Dendritic cell treated with granulocyte-macrophage colony-stimulating factor and Interleukin-4, amounts not matched to agents 40 ng/mL and 50 ng/mL, for 4 days (primary cell): ENCODE measurements at regions of chr5 and their contacts with region 1.

Region 1: GRCh38 chr5:123511648-123512605 is at the start of gene CSNK1G3:
- H3K4me3 Mint-ChIP-seq: peak within 1 kb of the TSS; percentile 97
- H3K27ac Mint-ChIP-seq: peak within 1 kb of the TSS; percentile 96
- H3K4me1 Mint-ChIP-seq: peaks cover 28% of the 10 kb centered on the region
- H3K27me3 Mint-ChIP-seq: peaks cover 5% of the 10 kb centered on the region

Region 2: GRCh38 chr5:121968910-121969607 is 1542.9 kb before region 1 on chr5:
- intact Hi-C with region 1: loop called (anchors 10 kb)
- H3K4me3 Mint-ChIP-seq: no peak overlapping the region
- H3K27ac Mint-ChIP-seq: no peak overlapping the region
- H3K4me1 Mint-ChIP-seq: peaks cover 24% of the 10 kb centered on the region
- H3K27me3 Mint-ChIP-seq: no peaks in the 10 kb centered on the region

Region 3: DNA sequence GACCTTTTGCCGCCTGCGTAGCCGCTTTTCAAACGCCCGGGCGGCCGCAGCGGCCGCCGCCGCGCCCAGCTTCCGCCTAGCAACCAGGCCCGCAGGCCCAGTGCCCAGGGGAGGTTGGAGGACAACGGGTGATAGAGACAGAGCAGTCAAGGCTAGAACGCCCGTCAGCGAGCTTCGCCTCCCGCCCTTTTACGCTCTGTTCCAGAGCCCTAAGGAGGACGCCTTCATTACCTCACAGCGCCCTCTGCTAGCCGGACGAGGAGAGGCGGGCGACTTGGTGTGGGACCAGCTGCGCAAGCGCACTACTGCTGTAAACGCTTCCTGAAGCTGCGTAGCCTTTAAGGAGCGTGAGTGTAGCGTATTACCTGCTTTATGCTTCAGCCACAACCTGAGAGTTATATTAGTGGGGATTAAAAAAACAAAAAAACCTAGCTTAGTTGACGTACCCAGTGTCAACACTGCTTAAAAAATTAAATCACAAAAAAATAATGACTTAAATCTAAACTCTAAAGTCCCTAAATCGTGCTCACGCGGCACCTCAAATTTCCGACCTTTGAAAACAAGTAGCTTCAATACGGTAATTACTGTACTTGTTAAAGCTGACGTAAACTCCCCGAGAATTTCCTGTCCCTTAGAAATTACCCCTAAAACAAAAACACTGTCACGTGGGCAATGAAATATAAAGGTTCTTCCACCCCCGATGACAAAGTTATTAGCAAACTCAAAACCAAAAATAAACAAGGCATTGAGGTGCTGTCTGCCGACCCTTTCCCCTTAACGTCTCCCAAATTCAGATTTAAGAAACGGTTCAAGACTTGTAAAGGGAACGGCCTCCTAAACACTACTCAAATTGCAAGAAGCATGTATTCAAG is 88.4 kb before region 1 on chr5 and contains the start of gene CEP120:
- intact Hi-C with region 1: loop called (anchors 1 kb)
- H3K4me3 Mint-ChIP-seq: no peak within 1 kb of the TSS
- H3K27ac Mint-ChIP-seq: no peak within 1 kb of the TSS
- H3K4me1 Mint-ChIP-seq: peaks cover 18% of the 10 kb centered on the region
- H3K27me3 Mint-ChIP-seq: no peaks in the 10 kb centered on the region

Region 4: GRCh38 chr5:123605822-123606221 is 93.9 kb after region 1 on chr5:
- intact Hi-C with region 1: loop called (anchors 5 kb)
- H3K4me3 Mint-ChIP-seq: no peak overlapping the region
- H3K27ac Mint-ChIP-seq: no peak overlapping the region
- H3K4me1 Mint-ChIP-seq: peaks cover 9% of the 10 kb centered on the region
- H3K27me3 Mint-ChIP-seq: no peaks in the 10 kb centered on the region